Transverse colon (tissue), 4 donors: ENCODE measurements at regions of chr20 and their contacts with region 1.

Region 1: DNA sequence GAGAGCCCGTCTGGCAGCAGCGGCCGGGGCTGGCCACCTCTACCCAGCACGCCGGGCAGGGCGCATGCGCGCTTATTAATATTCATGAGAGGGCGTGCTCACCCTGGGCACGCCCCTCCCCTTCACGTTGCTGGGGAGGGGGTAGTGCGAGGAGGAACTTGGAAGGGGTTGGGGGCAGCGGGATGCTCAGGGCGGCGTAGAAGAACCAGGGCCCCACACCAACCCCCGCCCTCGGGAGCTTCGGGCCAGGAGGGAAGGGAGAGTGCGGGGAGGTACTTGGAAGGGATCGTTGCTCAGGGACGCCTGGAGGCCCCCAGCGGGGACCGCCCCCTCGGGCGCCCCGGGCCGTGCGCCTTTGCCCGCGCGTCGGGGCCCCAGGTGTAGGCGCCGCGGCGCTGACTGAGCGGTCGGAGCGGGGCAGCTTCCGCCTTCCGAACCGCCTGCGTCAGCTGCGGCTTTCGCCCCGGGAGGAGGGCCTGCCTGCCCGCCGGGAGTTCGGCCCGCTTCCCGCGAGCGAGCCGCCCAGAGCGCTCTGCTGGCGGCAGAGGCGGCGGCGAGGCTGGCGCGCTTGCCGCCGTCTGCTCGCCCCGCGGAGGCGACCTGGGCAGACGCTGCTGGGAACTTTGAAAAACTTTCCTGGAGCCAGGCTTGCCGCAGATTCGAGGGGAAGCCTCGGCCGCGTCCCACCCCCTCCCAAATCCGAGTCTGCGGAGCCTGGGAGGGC is at the start of gene JAG1:
- DNase-seq: peak; percentile 97
- H3K4me3 ChIP-seq: peak within 1 kb of the TSS; percentile 94 to 97 (median 96)
- H3K27ac ChIP-seq: peak within 1 kb of the TSS; percentile 100
- H3K4me1 ChIP-seq: peaks cover 8 to 34% (median 31%) of the 10 kb centered on the region in 4 donors
- H3K27me3 ChIP-seq: no peaks in the 10 kb centered on the region
- CTCF ChIP-seq: peak in 1 of 5 experiments; percentile 0
- EP300 ChIP-seq: no peak
- POLR2A ChIP-seq: peak; percentile 96
- total RNA-seq, gene JAG1: 75.0 to 117 (median 109) TPM

Region 2: DNA sequence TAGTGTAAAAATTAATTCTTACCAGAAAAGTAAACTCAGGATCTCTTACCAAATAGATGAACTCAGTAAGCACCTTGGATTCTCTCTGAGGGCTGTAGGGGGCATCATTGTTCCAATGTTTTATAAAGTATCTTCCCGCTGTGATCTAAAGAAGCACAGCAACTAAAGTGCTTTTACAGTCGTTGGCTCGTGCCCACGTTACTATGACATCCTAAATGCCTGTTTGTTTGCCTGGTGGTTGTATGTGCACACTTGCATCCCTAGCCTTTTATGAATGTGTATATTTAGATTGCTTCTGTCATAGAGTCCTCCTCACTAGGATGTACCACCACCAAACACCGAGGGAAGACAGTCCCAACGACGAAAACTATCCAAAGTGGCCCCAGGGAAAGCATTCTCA is 204.6 kb before region 1 on chr20:
- in situ Hi-C with region 1: loop called in 1 of 4 experiments (anchors 25 kb)
- intact Hi-C with region 1: no loop called
- DNase-seq: peak; percentile 60
- H3K4me3 ChIP-seq: no peak overlapping the region
- H3K27ac ChIP-seq: peak overlapping the region in 3 of 4 donors; percentile 30 to 41 (median 37)
- H3K4me1 ChIP-seq: peaks cover 6 to 46% (median 13%) of the 10 kb centered on the region in 4 donors
- H3K27me3 ChIP-seq: no peaks in the 10 kb centered on the region
- CTCF ChIP-seq: peak; percentile 56 to 66 (median 60)
- EP300 ChIP-seq: no peak
- POLR2A ChIP-seq: no peak

Region 3: DNA sequence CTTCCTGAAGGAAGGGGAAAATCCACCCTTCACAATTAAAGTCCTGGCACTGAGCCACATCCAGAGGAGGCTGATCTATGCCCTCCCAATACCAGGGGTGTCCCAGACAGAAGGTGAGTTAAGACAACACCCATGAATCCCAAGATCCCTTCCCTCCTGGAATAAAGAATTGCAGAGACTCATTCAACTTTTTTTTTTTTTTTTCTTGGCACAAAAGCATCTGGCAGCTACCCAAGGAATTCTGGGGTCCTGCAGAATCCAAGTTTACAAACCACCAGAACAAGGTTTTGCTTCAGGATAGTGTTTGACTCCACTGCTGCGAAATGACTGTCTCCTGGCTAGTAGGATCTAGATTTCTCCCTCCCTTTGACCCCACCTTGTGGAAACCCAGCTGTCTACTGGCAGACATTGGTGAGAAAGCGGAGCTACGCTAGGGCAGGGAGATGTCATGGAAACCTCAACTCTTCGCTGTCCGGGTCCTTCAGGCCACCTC is 37.8 kb before region 1 on chr20:
- in situ Hi-C with region 1: no loop called
- intact Hi-C with region 1: no loop called
- DNase-seq: no peak
- H3K4me3 ChIP-seq: no peak overlapping the region
- H3K27ac ChIP-seq: peak overlapping the region; percentile 66 to 78 (median 74)
- H3K4me1 ChIP-seq: peaks cover 17 to 52% (median 22%) of the 10 kb centered on the region in 4 donors
- H3K27me3 ChIP-seq: no peaks in the 10 kb centered on the region
- CTCF ChIP-seq: no peak
- EP300 ChIP-seq: no peak
- POLR2A ChIP-seq: no peak

Region 4: GRCh38 chr20:10647465-10647864 is 26.7 kb before region 1 on chr20:
- in situ Hi-C with region 1: no loop called
- intact Hi-C with region 1: no loop called
- DNase-seq: peak; percentile 7
- H3K4me3 ChIP-seq: no peak overlapping the region
- H3K27ac ChIP-seq: no peak overlapping the region
- H3K4me1 ChIP-seq: peaks cover 0 to 17% (median under 1%) of the 10 kb centered on the region in 4 donors
- H3K27me3 ChIP-seq: no peaks in the 10 kb centered on the region
- CTCF ChIP-seq: no peak
- EP300 ChIP-seq: no peak
- POLR2A ChIP-seq: no peak

Region 5: GRCh38 chr20:11204926-11205768 is 531.0 kb after region 1 on chr20:
- in situ Hi-C with region 1: loop called in 1 of 4 experiments (anchors 10 kb)
- intact Hi-C with region 1: no loop called
- DNase-seq: peak; percentile 74
- H3K4me3 ChIP-seq: no peak overlapping the region
- H3K27ac ChIP-seq: peak overlapping the region in 2 of 4 donors; percentile 19 to 42
- H3K4me1 ChIP-seq: peaks cover 0 to 19% (median 4%) of the 10 kb centered on the region in 4 donors
- H3K27me3 ChIP-seq: no peaks in the 10 kb centered on the region
- CTCF ChIP-seq: peak; percentile 63 to 80 (median 74)
- EP300 ChIP-seq: no peak
- POLR2A ChIP-seq: no peak

Region 6: GRCh38 chr20:11274141-11274594 is 600.0 kb after region 1 on chr20:
- in situ Hi-C with region 1: no loop called
- intact Hi-C with region 1: loop called (anchors 10 kb)
- DNase-seq: no peak
- H3K4me3 ChIP-seq: no peak overlapping the region
- H3K27ac ChIP-seq: no peak overlapping the region
- H3K4me1 ChIP-seq: peaks cover 0 to 6% (median 0%) of the 10 kb centered on the region in 4 donors
- H3K27me3 ChIP-seq: no peaks in the 10 kb centered on the region
- CTCF ChIP-seq: peak; percentile 32 to 57 (median 53)
- EP300 ChIP-seq: no peak
- POLR2A ChIP-seq: no peak